HEK293 (cell line): ENCODE measurements at regions of chr20 and their contacts with region 1.

Region 1: DNA sequence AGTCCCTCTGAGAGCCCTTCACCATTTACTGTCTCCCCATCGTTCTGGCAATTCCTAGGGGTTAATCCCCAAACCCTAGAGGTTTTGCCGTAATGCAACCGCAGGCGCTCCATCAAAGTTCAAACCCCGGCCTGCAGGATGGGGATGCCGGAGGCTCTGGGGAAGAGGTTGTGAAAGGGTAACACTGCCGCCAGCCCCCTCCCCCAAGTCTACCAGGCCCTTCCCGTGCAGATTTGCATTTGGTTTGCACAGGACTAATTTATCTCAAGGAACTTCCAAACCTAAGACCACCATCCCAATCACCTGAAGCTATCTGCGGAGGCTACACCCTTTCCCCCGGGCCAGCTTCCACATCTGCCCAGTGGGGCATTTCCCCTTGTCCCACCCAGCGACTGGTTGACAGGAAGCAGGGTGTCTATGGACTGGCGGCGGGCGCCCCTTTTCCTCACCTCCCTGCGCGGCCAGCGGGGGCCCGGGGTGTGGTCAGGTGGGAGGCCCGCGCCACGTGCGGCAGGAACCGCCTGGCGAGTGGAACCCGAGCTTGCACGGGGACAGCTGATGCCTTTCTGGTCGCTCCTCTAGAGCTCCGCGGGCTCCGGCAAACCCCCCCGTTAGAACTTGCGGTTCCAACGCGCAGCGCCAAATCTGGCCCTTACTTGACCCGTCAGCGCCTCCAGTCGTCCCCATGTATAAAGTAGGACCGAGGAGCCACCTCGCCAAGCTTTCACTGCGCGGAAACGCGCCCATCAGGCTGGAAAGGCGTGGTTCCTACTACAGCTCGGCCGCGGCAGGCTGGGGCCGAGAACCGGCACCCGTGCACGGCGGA is 9.4 kb upstream of the SLC4A11 start:
- H3K4me3 ChIP-seq: no peak overlapping the region
- H3K27ac ChIP-seq: no peak overlapping the region
- H3K4me1 ChIP-seq: 0 out of 2 replicates have a peak, but pooled peaks cover 2% of the 10 kb centered on the region
- CTCF ChIP-seq: no peak

Region 2: GRCh38 chr20:3051385-3052019 is 196.9 kb before region 1 on chr20:
- CTCF ChIA-PET with region 1: interaction called, 23 read pairs
- POLR2A ChIA-PET with region 1: no interaction called
- H3K4me3 ChIP-seq: no peak overlapping the region
- H3K27ac ChIP-seq: no peak overlapping the region
- H3K4me1 ChIP-seq: peaks cover 5% of the 10 kb centered on the region
- CTCF ChIP-seq: no peak

Region 3: DNA sequence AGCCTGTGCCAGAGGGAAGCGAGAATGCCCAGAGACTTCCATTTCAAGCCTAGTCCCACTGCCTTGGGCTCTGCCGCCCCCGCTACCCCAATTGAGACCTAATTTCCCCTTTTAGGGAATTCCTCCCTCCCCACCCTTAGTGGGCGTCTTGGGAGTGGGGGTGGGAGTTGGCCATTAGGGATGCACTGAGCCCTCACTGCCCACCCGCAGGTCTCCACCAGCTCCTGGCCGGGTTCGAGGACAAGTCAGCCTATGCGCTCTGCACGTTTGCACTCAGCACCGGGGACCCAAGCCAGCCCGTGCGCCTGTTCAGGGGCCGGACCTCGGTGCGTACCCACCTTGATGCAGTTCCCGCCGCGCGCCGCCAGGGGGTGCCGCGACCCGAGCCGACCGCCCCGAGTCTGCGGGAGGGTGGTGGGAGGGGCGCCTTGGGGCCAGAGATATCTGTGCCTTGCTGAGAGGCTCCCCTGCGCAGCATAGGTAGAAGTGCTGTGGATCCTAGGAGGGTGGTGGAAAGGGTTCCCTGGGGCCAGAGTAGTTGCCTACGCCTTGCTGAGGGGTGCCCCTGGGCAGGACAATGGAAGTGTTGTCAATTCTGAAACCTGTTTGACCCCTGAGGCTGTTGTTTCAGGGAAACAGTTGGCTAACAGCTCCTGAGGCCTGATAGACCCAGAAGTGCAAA is 29.9 kb before region 1 on chr20:
- CTCF ChIA-PET with region 1: interaction called, 70 read pairs
- POLR2A ChIA-PET with region 1: interaction called, 7 read pairs
- H3K4me3 ChIP-seq: no peak overlapping the region
- H3K27ac ChIP-seq: no peak overlapping the region; the same call in 1 of the 2 replicates
- H3K4me1 ChIP-seq: no peaks in the 10 kb centered on the region; the same call in 1 of the 2 replicates
- CTCF ChIP-seq: peak; percentile 93

Region 4: DNA sequence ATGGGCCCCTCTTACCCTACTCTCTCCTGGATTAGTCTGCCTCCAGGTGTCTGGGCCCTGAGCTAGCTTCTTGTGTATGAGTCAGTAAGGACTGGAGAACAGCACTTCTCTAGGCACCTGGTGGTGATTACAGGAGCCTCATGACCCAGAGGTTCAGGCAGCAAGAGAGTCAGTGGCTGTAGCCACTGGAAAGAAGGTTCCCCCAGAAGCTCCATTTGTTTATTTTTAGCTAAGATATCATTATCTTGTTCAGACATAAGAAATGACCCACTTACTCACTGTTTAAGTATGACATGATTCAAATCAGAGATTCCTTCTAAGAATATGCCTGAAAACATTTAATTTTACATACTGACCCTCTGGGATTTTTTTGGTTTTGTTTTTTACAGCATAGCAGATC is 14.2 kb after region 1 on chr20:
- CTCF ChIA-PET with region 1: interaction called, 31 read pairs
- POLR2A ChIA-PET with region 1: no interaction called
- H3K4me3 ChIP-seq: no peak overlapping the region
- H3K27ac ChIP-seq: no peak overlapping the region
- H3K4me1 ChIP-seq: no peaks in the 10 kb centered on the region
- CTCF ChIP-seq: no peak

Region 5: GRCh38 chr20:3276680-3277015 is 28.3 kb after region 1 on chr20:
- CTCF ChIA-PET with region 1: interaction called, 18 read pairs
- POLR2A ChIA-PET with region 1: no interaction called
- H3K4me3 ChIP-seq: no peak overlapping the region
- H3K27ac ChIP-seq: no peak overlapping the region
- H3K4me1 ChIP-seq: no peaks in the 10 kb centered on the region
- CTCF ChIP-seq: peak; percentile 44; the same call in 1 of the 2 replicates

Region 6: GRCh38 chr20:3312940-3313682 is 64.7 kb after region 1 on chr20:
- CTCF ChIA-PET with region 1: interaction called, 22 read pairs
- POLR2A ChIA-PET with region 1: no interaction called
- H3K4me3 ChIP-seq: no peak overlapping the region
- H3K27ac ChIP-seq: no peak overlapping the region
- H3K4me1 ChIP-seq: peaks cover 3% of the 10 kb centered on the region; the same call in 1 of the 2 replicates
- CTCF ChIP-seq: no peak